Activated CD4-positive, alpha-beta T cell treated with anti-CD3 and anti-CD28 coated beads for 36 hours (primary cell): ENCODE measurements at regions of chr9 and their contacts with region 1.

Region 1: DNA sequence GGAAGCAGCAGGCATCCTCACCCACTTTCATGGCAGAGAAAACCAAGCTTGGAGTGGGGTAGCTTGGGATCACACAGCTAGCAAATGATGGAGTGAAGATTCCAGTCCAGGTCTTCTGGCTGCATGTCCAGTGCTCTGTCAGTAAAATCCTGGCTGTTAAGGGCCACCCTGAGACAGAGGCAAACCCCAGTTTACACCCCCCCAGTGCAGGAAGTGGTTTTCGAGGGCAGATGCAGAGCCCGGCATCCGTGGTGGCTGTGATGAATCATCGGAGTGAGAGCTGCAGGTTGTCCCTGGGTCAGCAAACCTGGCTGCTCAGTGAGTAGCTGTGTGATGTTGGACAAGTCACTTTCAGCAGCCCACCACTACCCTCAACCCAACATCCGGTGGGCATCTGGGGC is 115.4 kb downstream of the RGS3 start:
- DNase-seq: peak; percentile 94
- ATAC-seq: peak; percentile 66
- H3K4me3 Mint-ChIP-seq: peak overlapping the region; percentile 81
- H3K27ac Mint-ChIP-seq: peak overlapping the region; percentile 86
- H3K4me1 Mint-ChIP-seq: peaks cover 66% of the 10 kb centered on the region
- H3K27me3 Mint-ChIP-seq: no peaks in the 10 kb centered on the region

Region 2: DNA sequence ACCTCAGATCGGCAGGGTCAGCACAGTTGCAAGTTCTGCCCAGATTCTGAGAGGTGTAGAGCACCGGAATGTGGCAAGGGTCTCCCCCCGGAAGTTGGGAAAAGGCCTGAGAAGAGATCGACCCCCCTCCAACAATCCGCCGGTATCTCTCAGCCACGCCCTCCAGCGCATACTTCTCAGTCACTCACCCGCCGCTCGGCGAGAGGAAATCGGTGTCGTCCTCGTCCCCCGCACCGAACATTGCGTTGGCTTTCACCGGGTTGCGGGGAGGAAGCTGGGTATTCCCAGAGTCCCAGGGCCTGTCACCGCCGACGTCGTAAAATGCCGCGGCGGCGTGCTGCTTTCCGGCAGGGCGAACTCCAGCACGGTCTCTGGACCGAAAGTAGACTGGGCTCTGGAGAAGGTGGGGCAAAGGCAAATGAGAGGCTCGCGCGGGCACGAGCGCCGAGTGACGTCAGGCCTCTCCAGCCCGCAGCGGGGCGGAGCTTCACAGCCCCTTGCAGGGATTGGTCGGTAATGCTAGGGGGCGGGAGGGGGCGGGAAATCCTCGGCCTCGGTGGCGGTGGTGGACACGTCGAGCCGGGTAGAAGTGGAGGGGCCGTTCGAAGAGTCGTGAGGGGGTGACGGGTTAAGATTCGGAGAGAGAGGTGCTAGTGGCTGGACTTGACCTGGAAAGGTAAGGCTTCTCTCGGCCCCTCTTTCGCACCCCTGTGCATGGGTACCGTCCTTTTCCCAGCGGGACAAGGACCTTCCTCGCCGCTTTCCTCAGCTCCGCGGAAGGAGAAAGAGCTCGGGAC is 357.7 kb before region 1 on chr9 and contains the starts of genes FKBP15 and SLC31A1:
- CTCF ChIA-PET with region 1: interaction called, 4 read pairs
- POLR2A ChIA-PET with region 1: no interaction called
- intact Hi-C with region 1: loop called (anchors 5 kb)
- DNase-seq: peak; percentile 98
- ATAC-seq: peak; percentile 97
- H3K4me3 Mint-ChIP-seq: peak within 1 kb of the TSS; percentile 89
- H3K27ac Mint-ChIP-seq: peak within 1 kb of the TSS; percentile 93
- H3K4me1 Mint-ChIP-seq: peaks cover 46% of the 10 kb centered on the region
- H3K27me3 Mint-ChIP-seq: no peaks in the 10 kb centered on the region
- total RNA-seq, gene FKBP15: 34.0 to 44.2 TPM
- total RNA-seq, gene SLC31A1: 14.8 to 18.2 TPM

Region 3: GRCh38 chr9:113401027-113401792 is 177.7 kb before region 1 on chr9 and contains the start of gene ALAD:
- CTCF ChIA-PET with region 1: interaction called, 4 read pairs
- POLR2A ChIA-PET with region 1: no interaction called
- intact Hi-C with region 1: loop called in 1 of 2 experiments (anchors 1 kb)
- DNase-seq: peak; percentile 100
- ATAC-seq: peak; percentile 99
- H3K4me3 Mint-ChIP-seq: peak within 1 kb of the TSS; percentile 86
- H3K27ac Mint-ChIP-seq: peak within 1 kb of the TSS; percentile 84
- H3K4me1 Mint-ChIP-seq: peaks cover 19% of the 10 kb centered on the region
- H3K27me3 Mint-ChIP-seq: no peaks in the 10 kb centered on the region
- total RNA-seq, gene ALAD: 20.2 to 30.1 TPM

Region 4: DNA sequence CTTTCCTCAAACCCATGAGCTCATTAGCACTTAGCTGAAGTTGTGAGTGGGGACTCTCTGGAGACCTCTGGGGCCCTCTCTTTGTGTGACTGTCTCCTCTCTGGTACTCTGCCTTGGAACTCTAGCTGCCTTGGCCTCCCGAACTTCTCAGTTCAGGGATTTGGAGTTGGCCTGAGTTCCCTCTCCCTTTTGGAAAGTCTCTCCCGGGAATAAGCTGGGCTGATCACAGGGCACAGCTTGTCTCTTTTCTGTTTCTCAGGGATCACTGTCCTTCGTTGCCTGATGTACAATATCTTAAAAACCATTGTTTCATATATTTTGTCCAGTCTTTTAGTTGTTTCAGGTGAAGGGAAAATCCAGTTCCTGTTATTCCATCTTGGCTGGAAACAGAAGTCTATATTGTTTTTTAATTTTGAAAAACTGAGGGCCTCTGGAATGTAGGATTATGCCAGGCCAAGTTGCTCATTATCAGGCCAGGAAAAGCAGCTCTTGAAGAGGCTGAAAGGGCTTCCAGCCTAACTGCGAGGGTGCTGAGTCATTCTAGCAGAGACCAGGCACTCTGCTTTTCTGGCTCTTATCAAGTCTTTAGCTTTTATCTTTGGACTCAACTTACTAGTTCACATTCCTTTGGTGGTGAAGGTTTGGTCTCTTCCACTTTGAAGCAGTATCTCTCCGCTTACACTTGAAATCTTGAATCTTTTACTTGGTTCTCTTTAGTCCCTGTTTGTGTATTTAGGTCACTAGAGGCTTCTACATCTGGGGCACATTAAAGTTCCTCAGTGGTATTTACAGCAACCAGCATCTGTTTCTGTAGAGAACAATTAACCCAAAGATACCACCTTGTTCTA is 123.7 kb before region 1 on chr9:
- CTCF ChIA-PET with region 1: interaction called, 10 read pairs
- POLR2A ChIA-PET with region 1: interaction called, 3 read pairs
- intact Hi-C with region 1: no loop called
- DNase-seq: peak; percentile 19
- ATAC-seq: peak; percentile 42
- H3K4me3 Mint-ChIP-seq: no peak overlapping the region
- H3K27ac Mint-ChIP-seq: no peak overlapping the region
- H3K4me1 Mint-ChIP-seq: peaks cover 7% of the 10 kb centered on the region
- H3K27me3 Mint-ChIP-seq: no peaks in the 10 kb centered on the region

Region 5: GRCh38 chr9:113468716-113469448 is 110.0 kb before region 1 on chr9:
- CTCF ChIA-PET with region 1: no interaction called
- POLR2A ChIA-PET with region 1: no interaction called
- intact Hi-C with region 1: no loop called
- DNase-seq: no peak
- ATAC-seq: no peak
- H3K4me3 Mint-ChIP-seq: no peak overlapping the region
- H3K27ac Mint-ChIP-seq: no peak overlapping the region
- H3K4me1 Mint-ChIP-seq: no peaks in the 10 kb centered on the region
- H3K27me3 Mint-ChIP-seq: no peaks in the 10 kb centered on the region

Region 6: DNA sequence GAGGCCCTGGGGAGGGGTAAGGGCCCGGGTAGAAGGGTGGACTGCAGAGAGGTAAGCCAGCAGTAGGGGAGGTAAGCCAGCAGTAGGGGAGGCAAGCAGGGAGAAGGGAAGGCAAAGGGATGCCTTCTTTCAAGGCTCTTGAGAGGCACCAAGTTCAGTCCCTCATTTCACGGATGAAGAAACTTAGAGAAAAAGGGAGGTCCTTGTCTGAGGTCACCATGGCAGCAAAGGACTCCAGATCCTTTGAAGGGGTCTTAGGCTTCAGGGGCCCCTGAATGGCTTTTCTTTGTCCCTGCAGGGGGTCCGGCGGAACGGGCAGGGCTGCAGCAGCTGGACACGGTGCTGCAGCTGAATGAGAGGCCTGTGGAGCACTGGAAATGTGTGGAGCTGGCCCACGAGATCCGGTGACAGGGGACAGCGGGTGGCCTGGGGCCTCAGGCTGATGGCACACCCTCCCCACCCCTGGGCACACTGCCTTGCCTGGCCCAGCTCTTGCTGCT is 72.7 kb before region 1 on chr9:
- CTCF ChIA-PET with region 1: no interaction called
- POLR2A ChIA-PET with region 1: no interaction called
- intact Hi-C with region 1: no loop called
- DNase-seq: no peak
- ATAC-seq: no peak
- H3K4me3 Mint-ChIP-seq: no peak overlapping the region
- H3K27ac Mint-ChIP-seq: peak overlapping the region; percentile 14
- H3K4me1 Mint-ChIP-seq: peaks cover 9% of the 10 kb centered on the region
- H3K27me3 Mint-ChIP-seq: no peaks in the 10 kb centered on the region

Region 7: DNA sequence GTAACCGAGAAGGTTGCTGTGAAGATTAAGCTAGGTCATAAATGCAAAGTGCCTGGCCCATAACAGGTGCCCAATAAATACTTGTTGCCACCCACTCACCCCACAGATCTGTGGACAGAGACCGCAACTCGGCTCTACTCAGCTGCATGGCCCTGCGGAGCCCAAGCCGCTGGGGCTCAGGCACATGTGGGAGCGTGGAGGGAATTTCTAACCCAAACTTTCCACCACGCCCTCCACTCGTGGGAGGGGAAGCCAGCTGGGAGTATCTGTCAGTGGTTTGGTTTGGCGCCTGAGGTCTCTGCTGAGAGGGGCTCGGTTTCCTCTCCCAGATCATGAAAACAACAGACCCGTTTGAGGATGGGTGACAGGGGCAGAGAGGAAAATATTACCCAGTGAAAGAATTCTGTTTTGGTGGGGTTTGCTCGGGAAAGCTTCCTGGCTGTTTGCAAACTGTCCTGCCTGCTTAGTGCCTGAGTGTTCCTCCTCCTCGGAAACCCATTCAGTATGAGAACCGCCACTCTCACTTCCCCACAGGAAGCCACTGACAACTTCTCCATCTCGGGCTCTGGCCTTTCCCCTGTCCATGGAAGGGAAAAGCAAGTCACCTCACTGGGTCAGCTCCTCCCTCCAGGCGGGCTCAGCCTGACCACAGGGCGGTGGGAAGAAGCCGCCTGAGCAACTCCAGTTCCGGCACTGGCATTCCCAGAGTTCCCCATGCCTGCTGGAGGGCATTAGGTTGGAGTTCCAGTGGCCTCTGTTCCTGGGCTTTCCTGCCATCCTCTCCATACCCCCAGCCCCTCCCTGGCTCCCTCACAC is 55.3 kb before region 1 on chr9:
- CTCF ChIA-PET with region 1: interaction called, 4 read pairs
- POLR2A ChIA-PET with region 1: interaction called, 3 read pairs
- intact Hi-C with region 1: loop called in 1 of 2 experiments (anchors 1 kb)
- DNase-seq: peak; percentile 78
- ATAC-seq: peak; percentile 70
- H3K4me3 Mint-ChIP-seq: peak overlapping the region; percentile 40
- H3K27ac Mint-ChIP-seq: peak overlapping the region; percentile 55
- H3K4me1 Mint-ChIP-seq: peaks cover 61% of the 10 kb centered on the region
- H3K27me3 Mint-ChIP-seq: no peaks in the 10 kb centered on the region

Region 8: GRCh38 chr9:113591001-113591898 is 12.4 kb after region 1 on chr9:
- CTCF ChIA-PET with region 1: interaction called, 29 read pairs
- POLR2A ChIA-PET with region 1: no interaction called
- intact Hi-C with region 1: no loop called
- DNase-seq: peak; percentile 89
- ATAC-seq: peak; percentile 74
- H3K4me3 Mint-ChIP-seq: no peak overlapping the region
- H3K27ac Mint-ChIP-seq: no peak overlapping the region
- H3K4me1 Mint-ChIP-seq: peaks cover 40% of the 10 kb centered on the region
- H3K27me3 Mint-ChIP-seq: no peaks in the 10 kb centered on the region

Region 9: DNA sequence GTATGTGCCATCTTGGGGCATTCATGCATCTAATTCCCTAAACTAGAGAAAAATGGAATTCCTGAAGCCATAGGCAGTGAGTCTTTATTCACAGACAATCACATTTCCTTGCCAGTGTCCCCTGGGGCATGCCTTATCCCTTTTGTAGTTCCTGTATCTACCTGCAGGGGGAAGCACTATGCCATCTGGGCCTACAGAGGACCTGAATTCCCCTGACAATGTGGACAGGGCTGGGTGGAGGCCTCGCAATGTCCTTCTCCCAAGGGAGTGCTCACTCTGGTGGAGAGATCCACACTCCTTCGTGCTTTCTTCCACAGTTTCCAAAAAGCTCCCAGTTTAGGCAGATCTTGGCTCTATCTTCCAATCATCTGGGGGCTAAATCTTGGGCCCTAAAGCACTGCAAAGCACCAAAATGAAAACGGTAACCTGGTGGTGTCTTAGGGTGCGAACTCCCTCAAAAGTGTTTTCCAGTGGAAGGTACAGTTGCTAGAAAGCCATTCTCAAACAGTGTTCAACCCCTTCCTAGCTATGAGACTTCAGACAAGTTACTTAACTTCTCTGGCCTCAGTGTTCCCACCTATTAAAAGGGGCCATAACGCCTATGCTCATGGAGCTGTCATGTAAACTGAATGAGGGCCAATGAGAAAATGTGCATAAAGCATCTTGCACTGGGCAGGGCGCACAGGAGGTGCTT is 908.9 kb after region 1 on chr9:
- CTCF ChIA-PET with region 1: no interaction called
- POLR2A ChIA-PET with region 1: no interaction called
- intact Hi-C with region 1: no loop called
- DNase-seq: peak; percentile 72
- ATAC-seq: peak; percentile 63
- H3K4me3 Mint-ChIP-seq: no peak overlapping the region
- H3K27ac Mint-ChIP-seq: no peak overlapping the region
- H3K4me1 Mint-ChIP-seq: peaks cover 25% of the 10 kb centered on the region
- H3K27me3 Mint-ChIP-seq: no peaks in the 10 kb centered on the region